Activated CD4-positive, alpha-beta T cell treated with anti-CD3 and anti-CD28 coated beads for 36 hours (primary cell): ENCODE measurements at regions of chr2 and their contacts with region 1.

Region 1: GRCh38 chr2:63588385-63589147 is at the starts of genes MDH1 and WDPCP:
- DNase-seq: peak; percentile 96
- ATAC-seq: peak; percentile 92
- H3K4me3 Mint-ChIP-seq: peak within 1 kb of the TSS; percentile 100
- H3K27ac Mint-ChIP-seq: peak within 1 kb of the TSS; percentile 97
- H3K4me1 Mint-ChIP-seq: peaks cover 36% of the 10 kb centered on the region
- H3K27me3 Mint-ChIP-seq: no peaks in the 10 kb centered on the region
- total RNA-seq, gene MDH1: 212 to 265 TPM
- total RNA-seq, gene WDPCP: 6.5 to 8.2 TPM

Region 2: GRCh38 chr2:61888267-61889055 is 1700.1 kb before region 1 on chr2 and contains the start of gene CCT4:
- CTCF ChIA-PET with region 1: no interaction called
- POLR2A ChIA-PET with region 1: no interaction called
- intact Hi-C with region 1: loop called in 1 of 2 experiments (anchors 5 kb)
- DNase-seq: peak; percentile 93
- ATAC-seq: peak; percentile 79
- H3K4me3 Mint-ChIP-seq: peak within 1 kb of the TSS; percentile 99
- H3K27ac Mint-ChIP-seq: peak within 1 kb of the TSS; percentile 99
- H3K4me1 Mint-ChIP-seq: peaks cover 31% of the 10 kb centered on the region
- H3K27me3 Mint-ChIP-seq: no peaks in the 10 kb centered on the region
- total RNA-seq, gene CCT4: 255 to 373 TPM

Region 3: DNA sequence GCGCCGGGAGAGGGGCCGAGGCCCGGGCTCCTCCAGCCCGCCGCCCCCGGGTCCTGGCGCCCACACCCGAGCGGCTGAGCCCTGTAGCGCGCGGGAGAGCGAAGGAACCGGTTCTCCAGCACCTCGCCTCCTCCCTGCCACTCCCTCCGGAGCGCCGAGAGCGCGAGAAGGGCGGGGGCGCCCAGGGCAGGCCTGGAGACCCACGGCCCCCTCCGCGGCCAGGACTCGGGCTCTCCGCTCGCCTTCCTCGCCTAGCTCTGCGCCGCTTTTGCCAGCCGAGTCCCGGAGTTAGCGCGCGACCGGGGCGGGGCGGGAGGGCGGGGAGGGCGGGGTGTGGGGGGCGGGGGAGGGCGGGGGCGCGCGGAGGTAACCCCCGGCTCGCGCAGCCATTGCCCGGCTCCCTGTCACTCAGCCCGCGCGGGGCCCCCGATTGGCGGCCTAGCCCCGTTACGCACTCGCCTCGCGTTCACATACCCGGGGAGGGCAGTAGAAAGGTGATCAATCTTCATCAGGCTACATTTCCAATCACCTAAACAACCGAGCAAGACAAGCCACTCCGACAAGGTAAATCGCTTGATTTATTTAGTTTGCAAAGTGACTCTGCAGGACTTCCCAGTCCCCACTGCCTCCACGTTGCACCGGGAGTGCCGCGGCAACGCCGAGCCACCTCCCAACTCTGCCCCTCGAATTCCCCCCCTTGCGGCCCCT is 538.1 kb before region 1 on chr2 and contains the start of gene OTX1:
- CTCF ChIA-PET with region 1: no interaction called
- POLR2A ChIA-PET with region 1: no interaction called
- intact Hi-C with region 1: loop called (anchors 2 to 5 kb)
- DNase-seq: peak; percentile 80
- ATAC-seq: peak; percentile 80
- H3K4me3 Mint-ChIP-seq: peak within 1 kb of the TSS; percentile 75
- H3K27ac Mint-ChIP-seq: peak within 1 kb of the TSS; percentile 47
- H3K4me1 Mint-ChIP-seq: peaks cover 60% of the 10 kb centered on the region
- H3K27me3 Mint-ChIP-seq: peaks cover 78% of the 10 kb centered on the region
- total RNA-seq, gene OTX1: not detected

Region 4: DNA sequence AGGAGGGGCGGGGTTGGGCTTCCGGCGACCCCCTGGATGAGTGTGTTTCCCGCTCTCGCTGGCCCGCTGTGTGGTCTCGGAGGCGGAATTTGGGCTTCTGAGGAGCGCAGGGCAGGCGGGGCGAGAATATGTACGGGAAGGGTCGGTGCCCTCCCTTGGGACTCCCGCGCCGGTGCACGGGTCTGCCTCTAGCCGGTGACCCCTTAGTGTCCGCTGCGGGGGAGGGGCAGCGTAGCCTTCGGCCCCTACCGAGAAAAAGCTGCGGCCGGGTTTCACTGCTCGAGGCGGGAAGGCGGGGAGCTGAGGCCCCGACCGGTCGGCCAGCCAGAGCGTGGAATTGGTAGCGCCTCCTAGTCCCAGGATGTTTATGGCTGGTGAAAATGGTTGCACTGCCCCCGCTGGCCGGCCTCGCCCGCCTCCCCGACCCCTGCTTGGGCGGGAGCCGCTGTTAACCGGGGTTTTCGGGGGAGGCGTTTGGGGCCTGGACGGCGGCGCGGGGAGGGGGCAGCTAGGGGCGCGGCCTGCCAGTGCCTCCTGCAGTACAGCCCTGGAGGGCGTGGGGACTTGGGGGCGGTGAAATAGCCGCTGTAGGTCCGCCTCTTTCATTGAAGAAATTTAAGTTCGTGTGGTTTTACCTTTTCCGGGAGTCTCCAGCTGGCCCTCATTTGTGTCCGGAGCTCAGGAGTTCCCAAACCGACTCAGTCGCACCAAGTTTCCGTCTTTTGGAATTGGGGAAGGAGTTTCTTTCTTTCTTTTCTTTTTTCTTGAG is 252.9 kb after region 1 on chr2 and contains the start of gene UGP2:
- CTCF ChIA-PET with region 1: interaction called, 4 read pairs
- POLR2A ChIA-PET with region 1: interaction called, 5 read pairs
- intact Hi-C with region 1: loop called (anchors 1 kb)
- DNase-seq: peak; percentile 91
- ATAC-seq: peak; percentile 72
- H3K4me3 Mint-ChIP-seq: peak within 1 kb of the TSS; percentile 92
- H3K27ac Mint-ChIP-seq: peak within 1 kb of the TSS; percentile 98
- H3K4me1 Mint-ChIP-seq: peaks cover 39% of the 10 kb centered on the region
- H3K27me3 Mint-ChIP-seq: no peaks in the 10 kb centered on the region
- total RNA-seq, gene UGP2: 98.4 to 144 TPM

Region 5: GRCh38 chr2:64018923-64019718 is 430.6 kb after region 1 on chr2 and contains the start of gene VPS54:
- CTCF ChIA-PET with region 1: no interaction called
- POLR2A ChIA-PET with region 1: no interaction called
- intact Hi-C with region 1: loop called in 1 of 2 experiments (anchors 5 kb)
- DNase-seq: peak; percentile 74
- ATAC-seq: peak; percentile 80
- H3K4me3 Mint-ChIP-seq: peak within 1 kb of the TSS; percentile 99
- H3K27ac Mint-ChIP-seq: peak within 1 kb of the TSS; percentile 98
- H3K4me1 Mint-ChIP-seq: peaks cover 37% of the 10 kb centered on the region
- H3K27me3 Mint-ChIP-seq: no peaks in the 10 kb centered on the region
- total RNA-seq, gene VPS54: 9.0 to 11.7 TPM

Region 6: GRCh38 chr2:65129826-65130663 is 1541.5 kb after region 1 on chr2 and contains the start of gene RAB1A:
- CTCF ChIA-PET with region 1: no interaction called
- POLR2A ChIA-PET with region 1: interaction called, 3 read pairs
- intact Hi-C with region 1: loop called in 1 of 2 experiments (anchors 5 kb)
- DNase-seq: peak; percentile 100
- ATAC-seq: peak; percentile 95
- H3K4me3 Mint-ChIP-seq: peak within 1 kb of the TSS; percentile 100
- H3K27ac Mint-ChIP-seq: peak within 1 kb of the TSS; percentile 100
- H3K4me1 Mint-ChIP-seq: peaks cover 30% of the 10 kb centered on the region
- H3K27me3 Mint-ChIP-seq: no peaks in the 10 kb centered on the region
- total RNA-seq, gene RAB1A: 77.1 to 84.8 TPM